Activated CD4-positive, alpha-beta T cell treated with anti-CD3 and anti-CD28 coated beads, Interleukin-2, amount 10 ng/mL, durations not matched to agents 7 days and 5 days (primary cell): ENCODE measurements at regions of chr3 and their contacts with region 1.

Region 1: DNA sequence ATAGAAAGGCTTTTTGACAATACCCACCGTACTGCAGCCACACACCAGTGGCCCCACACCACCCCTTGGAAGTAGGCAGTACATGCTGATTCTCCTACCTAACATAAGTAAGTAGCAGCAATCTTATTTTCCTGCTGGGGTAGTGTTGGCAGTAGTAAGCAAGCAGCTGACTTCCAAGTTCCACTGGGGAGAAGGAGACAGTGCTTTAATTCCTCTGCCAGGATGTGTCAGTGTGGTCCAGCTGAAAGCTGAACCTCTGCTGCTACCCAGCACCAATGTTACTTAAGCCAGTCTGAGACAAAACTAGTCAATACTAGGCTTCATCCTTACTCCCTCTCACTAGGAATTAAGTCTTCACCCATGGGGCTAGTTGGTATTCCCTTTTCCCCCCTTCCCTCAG is 74.7 kb downstream of the DZIP3 start:
- DNase-seq: no peak
- H3K4me3 Mint-ChIP-seq: no peak overlapping the region
- H3K27ac Mint-ChIP-seq: no peak overlapping the region
- H3K4me1 Mint-ChIP-seq: peaks cover 22% of the 10 kb centered on the region
- H3K27me3 Mint-ChIP-seq: no peaks in the 10 kb centered on the region

Region 2: GRCh38 chr3:108914774-108915641 is 250.7 kb after region 1 on chr3:
- CTCF ChIA-PET with region 1: interaction called, 10 read pairs
- POLR2A ChIA-PET with region 1: no interaction called
- DNase-seq: peak; percentile 78
- H3K4me3 Mint-ChIP-seq: no peak overlapping the region
- H3K27ac Mint-ChIP-seq: peak overlapping the region; percentile 62
- H3K4me1 Mint-ChIP-seq: peaks cover 20% of the 10 kb centered on the region
- H3K27me3 Mint-ChIP-seq: peaks cover 4% of the 10 kb centered on the region